ENCODE measurements at regions of chr17 and their contacts with region 1.

Region 1: DNA sequence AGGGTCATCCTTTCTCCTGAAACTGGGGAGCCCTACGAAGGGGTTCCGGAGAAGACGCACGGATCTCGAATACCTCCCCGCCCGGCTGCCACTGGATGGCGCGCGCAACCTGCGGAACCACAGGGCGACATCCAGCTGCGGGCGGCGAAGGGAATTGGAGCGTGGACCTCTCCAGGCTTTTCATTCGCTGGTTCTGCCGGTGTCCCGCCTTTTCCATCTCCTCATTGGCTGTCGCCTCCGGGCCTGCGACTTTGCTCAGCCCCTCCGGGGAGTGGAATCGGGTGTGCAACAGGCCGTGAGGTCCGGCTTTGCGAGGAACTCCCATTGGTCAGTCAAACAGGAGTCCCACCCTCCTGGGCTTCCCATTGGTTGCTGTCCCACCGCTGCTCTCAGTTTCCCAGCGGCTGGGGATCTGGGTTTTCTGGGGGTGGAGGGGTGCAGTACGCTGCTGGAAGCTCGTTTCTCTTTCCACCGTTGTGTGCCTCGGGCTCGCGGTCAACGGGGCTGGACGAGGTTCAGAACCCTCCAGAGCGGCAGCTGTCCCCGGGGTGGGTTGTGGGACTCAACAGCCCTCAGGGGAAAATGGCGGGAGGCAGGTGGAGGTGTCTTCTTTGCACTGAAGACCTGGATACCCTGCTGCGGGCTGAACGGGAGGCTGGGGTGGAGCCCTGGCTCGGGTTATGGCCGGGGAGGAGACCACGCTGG is 14.5 kb downstream of the OR1D5 start:
- H3K4me3 Mint-ChIP-seq: peak overlapping the region; percentile 95
- H3K27ac Mint-ChIP-seq: peak overlapping the region; percentile 88
- H3K4me1 Mint-ChIP-seq: peaks cover 10% of the 10 kb centered on the region
- H3K27me3 Mint-ChIP-seq: peaks cover 7% of the 10 kb centered on the region

Region 2: GRCh38 chr17:2995886-2996855 is 52.7 kb before region 1 on chr17:
- intact Hi-C with region 1: no loop called
- H3K4me3 Mint-ChIP-seq: no peak overlapping the region
- H3K27ac Mint-ChIP-seq: no peak overlapping the region
- H3K4me1 Mint-ChIP-seq: peaks cover under 1% of the 10 kb centered on the region
- H3K27me3 Mint-ChIP-seq: no peaks in the 10 kb centered on the region

Region 3: GRCh38 chr17:3447625-3448024 is 398.7 kb after region 1 on chr17:
- intact Hi-C with region 1: loop called (anchors 5 kb)
- H3K4me3 Mint-ChIP-seq: no peak overlapping the region
- H3K27ac Mint-ChIP-seq: no peak overlapping the region
- H3K4me1 Mint-ChIP-seq: no peaks in the 10 kb centered on the region
- H3K27me3 Mint-ChIP-seq: peaks cover 1% of the 10 kb centered on the region

Region 4: GRCh38 chr17:3647769-3648555 is 599.0 kb after region 1 on chr17:
- intact Hi-C with region 1: loop called (anchors 5 kb)
- H3K4me3 Mint-ChIP-seq: no peak overlapping the region
- H3K27ac Mint-ChIP-seq: no peak overlapping the region
- H3K4me1 Mint-ChIP-seq: peaks cover 48% of the 10 kb centered on the region
- H3K27me3 Mint-ChIP-seq: no peaks in the 10 kb centered on the region